ENCODE measurements at regions of chr17 and their contacts with region 1.

Region 1: GRCh38 chr17:37047631-37048104 is 98.9 kb downstream of the AATF start:
- DNase-seq: peak; percentile 94

Region 2: DNA sequence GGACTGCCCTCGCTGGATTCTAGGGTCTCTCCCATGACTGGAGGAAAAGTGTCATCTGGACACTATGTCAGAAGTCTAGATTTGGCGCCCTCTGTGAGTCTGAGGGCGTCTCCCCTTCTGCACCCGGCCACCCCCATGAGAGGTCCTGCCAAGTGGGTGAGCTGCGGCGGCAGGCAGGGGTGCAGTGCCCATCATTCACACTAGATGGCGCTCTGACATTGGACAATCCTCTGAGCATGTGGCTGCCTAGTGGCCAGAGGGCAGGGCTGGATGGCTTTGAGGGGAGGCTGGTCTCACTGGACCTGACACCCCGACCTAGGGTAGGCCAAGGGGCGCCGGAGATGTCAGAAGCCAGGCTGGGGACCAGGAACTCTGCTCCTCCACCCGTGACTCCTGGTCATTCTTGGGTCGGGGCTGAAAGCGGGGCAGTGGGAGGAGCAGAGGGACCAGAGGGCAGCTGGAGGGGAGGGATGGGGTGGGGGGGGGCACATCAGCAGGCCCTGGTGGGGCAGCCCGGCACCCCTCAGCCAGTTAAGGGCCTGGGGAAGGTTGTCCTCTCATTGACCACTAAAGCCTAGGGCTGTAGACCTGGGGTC is 418.3 kb before region 1 on chr17:
- intact Hi-C with region 1: loop called (anchors 5 to 10 kb)
- DNase-seq: peak; percentile 92

Region 3: DNA sequence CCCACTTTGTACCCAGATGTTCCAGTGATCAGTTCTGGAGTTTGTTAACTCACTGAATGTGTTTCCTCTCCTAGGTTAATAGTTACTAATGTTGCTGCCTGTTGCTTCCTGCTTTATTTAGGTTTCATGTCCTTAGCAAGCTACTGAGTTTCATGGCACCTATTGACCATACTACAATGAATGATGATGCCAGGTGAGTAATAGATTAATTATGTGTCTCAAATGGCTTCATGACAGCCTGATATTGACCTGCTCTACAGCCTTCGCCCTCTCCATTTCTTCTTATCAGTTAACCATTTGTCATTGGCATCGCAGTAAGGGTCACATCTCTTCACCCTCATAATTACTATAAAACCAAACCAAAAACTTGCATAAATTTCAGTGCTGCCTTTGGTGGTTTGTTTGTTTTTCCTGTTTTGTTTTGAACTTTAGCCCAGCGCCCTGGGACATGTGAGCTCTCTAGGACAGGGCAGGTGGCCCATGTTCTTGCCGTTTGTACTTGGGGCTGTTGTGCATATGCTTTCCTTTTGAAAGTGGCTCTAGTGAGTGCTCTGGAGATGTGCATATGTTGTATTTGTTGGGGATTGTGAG is 16.1 kb before region 1 on chr17:
- intact Hi-C with region 1: no loop called
- DNase-seq: no peak

Region 4: DNA sequence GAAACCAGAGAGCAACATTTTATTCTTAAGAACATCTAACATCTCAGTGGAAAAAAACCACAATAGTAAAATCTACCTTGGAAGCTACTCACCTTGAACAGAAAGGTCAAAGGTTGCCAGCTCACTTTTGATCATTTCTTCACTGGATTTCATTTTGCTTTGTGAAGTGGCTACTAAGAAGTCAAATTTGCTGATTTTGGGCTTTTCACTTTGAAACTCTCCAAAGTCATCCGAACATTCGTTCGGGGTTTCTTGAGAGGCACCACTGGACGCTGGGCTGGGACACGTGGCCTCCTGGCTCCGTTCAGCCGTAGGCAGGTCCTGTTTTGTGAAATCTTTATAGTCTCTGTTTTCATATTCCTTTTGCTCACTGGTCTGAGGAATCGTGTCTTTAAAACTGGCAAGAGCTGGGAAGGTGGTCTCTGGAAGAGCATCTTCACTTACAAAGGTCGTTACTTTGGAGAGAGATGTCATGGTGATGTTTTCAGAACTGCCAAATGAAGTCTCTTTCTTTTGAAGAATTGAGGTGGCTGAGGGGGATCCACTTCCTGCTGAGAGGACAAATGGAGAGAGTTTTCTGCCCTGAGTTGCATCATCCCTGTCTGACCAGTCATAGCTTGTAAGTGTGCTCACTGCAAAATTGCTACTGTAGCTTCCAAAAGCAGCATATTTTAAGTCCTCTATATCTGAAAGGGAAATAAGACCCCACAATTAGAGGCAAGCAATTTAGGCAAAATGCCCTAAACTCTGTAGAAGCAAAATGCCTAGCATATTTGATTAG is 494.4 kb after region 1 on chr17:
- intact Hi-C with region 1: loop called in 1 of 2 experiments (anchors 5 kb)
- DNase-seq: no peak